Heart left ventricle (tissue), 16 donors: ENCODE measurements at regions of chr6 and their contacts with region 1.

Region 1: DNA sequence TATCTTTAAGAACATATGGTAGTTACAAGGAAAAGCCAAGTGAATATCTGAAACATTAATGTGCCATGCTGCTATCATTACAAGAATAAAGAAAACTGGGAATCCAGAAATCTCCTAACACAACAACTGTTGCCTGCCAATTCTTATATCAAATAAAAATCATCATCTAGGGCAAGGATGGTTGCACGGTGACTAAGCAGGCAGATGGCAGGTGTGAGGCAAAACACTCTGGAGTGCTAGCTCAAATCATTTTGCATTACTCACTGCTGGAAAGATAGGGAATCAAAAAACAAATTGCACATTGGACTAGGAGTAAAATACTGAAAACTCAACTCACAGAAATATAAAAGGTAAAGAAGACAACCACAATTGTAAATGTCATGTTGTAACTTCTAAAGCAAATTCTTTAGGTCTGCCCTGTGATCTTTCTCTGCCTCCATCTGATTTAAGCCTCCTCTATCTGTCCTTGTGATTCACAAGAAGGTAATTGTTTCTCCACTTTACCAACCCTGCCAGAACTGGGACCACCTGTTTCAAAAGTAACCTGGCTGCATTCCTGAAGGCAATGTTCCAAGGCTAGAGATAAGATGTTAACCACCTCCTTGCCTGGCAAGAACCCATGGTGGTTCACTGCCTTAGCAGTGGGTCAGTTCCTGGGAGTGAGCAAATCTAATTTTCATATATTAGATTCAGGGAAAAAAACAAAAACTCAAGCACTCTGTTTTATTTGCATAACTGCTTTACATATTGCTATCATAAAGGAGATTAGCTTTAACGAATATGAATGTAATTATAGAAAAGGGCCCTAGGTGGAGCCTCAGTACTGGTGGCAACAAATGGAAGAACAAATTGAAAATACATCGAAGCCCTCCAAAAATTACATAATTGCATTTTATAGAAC is 33.1 kb upstream of the LCA5 start:
- DNase-seq: no peak
- ATAC-seq: peak in 3 of 4 donors; percentile 51 to 74 (median 60)
- H3K4me3 ChIP-seq: peak overlapping the region in 9 of 12 donors; percentile 25 to 55 (median 38)
- H3K27ac ChIP-seq: no peak overlapping the region
- H3K4me1 ChIP-seq: peaks cover 0 to 14% (median 6%) of the 10 kb centered on the region in 12 donors
- H3K27me3 ChIP-seq: no peaks in the 10 kb centered on the region
- CTCF ChIP-seq: peak; percentile 59 to 82 (median 68)
- POLR2A ChIP-seq: no peak

Region 2: GRCh38 chr6:79630883-79631692 is 60.7 kb after region 1 on chr6 and contains the start of gene SH3BGRL2:
- intact Hi-C with region 1: loop called in 2 of 10 experiments (anchors 5 to 10 kb)
- DNase-seq: peak; percentile 66 to 84 (median 74)
- ATAC-seq: peak; percentile 88 to 97 (median 96)
- H3K4me3 ChIP-seq: peak within 1 kb of the TSS; percentile 53 to 97 (median 84)
- H3K27ac ChIP-seq: peak within 1 kb of the TSS in 10 of 12 donors; percentile 35 to 86 (median 74)
- H3K4me1 ChIP-seq: peaks cover 0 to 26% (median 6%) of the 10 kb centered on the region in 12 donors
- H3K27me3 ChIP-seq: peaks cover 0 to 16% (median 0%) of the 10 kb centered on the region in 9 donors
- CTCF ChIP-seq: no peak
- POLR2A ChIP-seq: peak in 1 of 2 donors; percentile 49
- total RNA-seq, gene SH3BGRL2: 4.4 to 14.1 (median 5.6) TPM

Region 3: DNA sequence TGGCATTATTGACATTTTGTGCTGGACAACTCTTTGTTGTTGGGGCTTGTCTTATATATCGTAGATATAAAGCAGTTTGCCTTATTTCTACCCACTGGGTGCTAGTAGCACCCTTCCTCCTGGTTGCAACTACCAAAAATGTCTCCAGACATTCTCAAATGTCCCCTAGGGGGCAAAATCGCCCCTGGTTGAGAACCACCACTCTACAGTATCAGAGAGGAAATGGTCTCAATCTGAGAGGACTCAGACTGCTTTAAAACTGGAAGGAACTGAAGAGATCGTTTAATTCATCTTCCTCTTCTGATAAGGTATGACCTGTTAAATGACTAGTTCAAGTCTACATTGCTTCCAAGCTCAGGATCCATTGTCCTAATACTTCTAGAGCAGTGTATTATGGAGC is 75.6 kb after region 1 on chr6:
- intact Hi-C with region 1: no loop called
- DNase-seq: no peak
- ATAC-seq: no peak
- H3K4me3 ChIP-seq: no peak overlapping the region
- H3K27ac ChIP-seq: no peak overlapping the region
- H3K4me1 ChIP-seq: peaks cover 0 to 32% (median 17%) of the 10 kb centered on the region in 12 donors
- H3K27me3 ChIP-seq: no peaks in the 10 kb centered on the region
- CTCF ChIP-seq: peak in 1 of 12 donors; percentile 12
- POLR2A ChIP-seq: no peak

Region 4: DNA sequence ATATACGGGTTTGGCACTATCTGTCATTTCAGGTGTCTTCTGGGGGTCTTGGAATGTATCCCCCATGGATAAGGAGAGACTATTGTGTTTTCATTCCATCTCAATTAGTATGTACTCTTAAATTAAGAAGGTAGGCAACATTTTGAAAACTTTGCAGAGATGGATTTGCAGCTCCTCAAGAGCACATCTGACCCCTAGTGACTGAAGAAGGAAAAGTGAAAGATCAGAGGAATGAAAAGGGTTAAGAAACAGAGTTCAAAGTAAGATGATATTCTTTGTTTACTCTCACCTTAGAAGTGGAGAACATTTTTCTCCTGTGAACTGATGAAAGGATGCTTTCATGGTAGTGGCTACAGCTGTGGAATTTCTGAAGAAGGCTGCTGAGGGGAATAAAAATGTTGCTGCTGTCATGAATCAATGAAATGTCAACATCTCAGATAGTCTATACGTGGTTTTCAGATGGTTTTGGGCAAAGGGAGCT is 102.3 kb after region 1 on chr6:
- intact Hi-C with region 1: loop called in 5 of 10 experiments (anchors 2 to 10 kb)
- DNase-seq: no peak
- ATAC-seq: no peak
- H3K4me3 ChIP-seq: no peak overlapping the region
- H3K27ac ChIP-seq: peak overlapping the region in 3 of 12 donors; percentile 21 to 55 (median 25)
- H3K4me1 ChIP-seq: peaks cover 0 to 21% (median 8%) of the 10 kb centered on the region in 12 donors
- H3K27me3 ChIP-seq: no peaks in the 10 kb centered on the region
- CTCF ChIP-seq: peak; percentile 6 to 61 (median 41)
- POLR2A ChIP-seq: no peak

Region 5: DNA sequence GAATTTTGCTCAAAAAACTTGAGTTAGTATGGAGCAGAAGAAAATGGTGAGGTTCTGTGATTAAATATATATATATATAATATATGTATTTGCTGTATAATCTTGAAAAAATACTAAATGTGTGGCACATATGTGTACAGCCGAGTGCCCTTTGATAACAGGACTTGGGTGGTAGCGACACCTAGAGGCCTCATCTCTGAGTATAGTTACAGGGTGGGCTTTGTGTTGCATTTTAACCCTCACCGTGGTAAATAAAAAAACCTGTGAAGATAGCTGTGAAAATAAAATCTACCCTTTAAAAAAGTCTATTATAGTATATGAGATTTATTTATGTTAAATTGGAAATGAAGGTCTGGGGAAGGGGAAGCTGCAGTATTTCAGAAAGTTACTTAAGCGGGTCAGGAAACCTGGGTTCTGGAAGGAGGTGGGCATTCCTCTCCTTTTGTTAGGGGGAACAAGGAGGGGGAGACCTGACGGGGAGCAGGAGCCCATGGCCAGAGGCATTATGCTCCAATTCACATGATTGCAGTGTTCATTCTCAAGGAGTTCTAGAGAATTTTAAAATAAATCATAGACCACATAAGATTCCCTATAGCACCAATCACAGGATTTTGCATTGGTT is 143.4 kb after region 1 on chr6:
- intact Hi-C with region 1: loop called (anchors 1 to 10 kb)
- DNase-seq: peak in 4 of 5 donors; percentile 13 to 51 (median 28)
- ATAC-seq: peak in 3 of 4 donors; percentile 67 to 73 (median 68)
- H3K4me3 ChIP-seq: no peak overlapping the region
- H3K27ac ChIP-seq: no peak overlapping the region
- H3K4me1 ChIP-seq: peaks cover 0 to 16% (median 2%) of the 10 kb centered on the region in 12 donors
- H3K27me3 ChIP-seq: no peaks in the 10 kb centered on the region
- CTCF ChIP-seq: peak; percentile 51 to 79 (median 65)
- POLR2A ChIP-seq: no peak

Region 6: DNA sequence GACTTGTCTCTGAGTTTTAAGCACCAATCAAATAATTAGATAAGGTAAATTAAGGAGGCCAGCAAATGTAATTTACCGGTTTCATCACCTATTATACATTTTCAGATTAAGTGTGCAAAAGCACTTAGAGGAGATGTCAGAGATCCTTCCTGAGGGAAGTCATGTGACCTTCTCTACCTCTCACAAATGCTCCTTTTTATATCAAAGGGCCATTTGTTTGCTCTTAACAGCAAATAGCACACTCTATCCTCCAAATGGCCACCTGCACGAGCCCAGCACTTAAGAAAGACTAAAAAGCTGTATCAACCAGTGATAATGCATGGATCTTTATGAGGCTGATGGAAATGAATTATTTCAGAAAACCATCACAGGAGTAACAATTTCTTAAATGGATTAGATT is 227.5 kb after region 1 on chr6:
- intact Hi-C with region 1: loop called in 1 of 10 experiments (anchors 10 kb)
- DNase-seq: no peak
- ATAC-seq: no peak
- H3K4me3 ChIP-seq: no peak overlapping the region
- H3K27ac ChIP-seq: no peak overlapping the region
- H3K4me1 ChIP-seq: no peaks in the 10 kb centered on the region
- H3K27me3 ChIP-seq: peaks cover 0 to 4% (median 0%) of the 10 kb centered on the region in 9 donors
- CTCF ChIP-seq: no peak
- POLR2A ChIP-seq: no peak

Region 7: GRCh38 chr6:79813854-79814709 is 243.7 kb after region 1 on chr6:
- intact Hi-C with region 1: loop called in 4 of 10 experiments (anchors 5 to 10 kb)
- DNase-seq: peak; percentile 51 to 73 (median 56)
- ATAC-seq: peak in 3 of 4 donors; percentile 54 to 72 (median 59)
- H3K4me3 ChIP-seq: no peak overlapping the region
- H3K27ac ChIP-seq: no peak overlapping the region
- H3K4me1 ChIP-seq: no peaks in the 10 kb centered on the region
- H3K27me3 ChIP-seq: no peaks in the 10 kb centered on the region
- CTCF ChIP-seq: peak; percentile 71 to 91 (median 86)
- POLR2A ChIP-seq: no peak